Heart right ventricle (tissue), 16 donors: ENCODE measurements at regions of chr12 and their contacts with region 1.

Region 1: GRCh38 chr12:109264095-109264942 is 44.8 kb downstream of the FOXN4 start:
- DNase-seq: peak; percentile 64 to 77
- ATAC-seq: peak; percentile 56 to 86 (median 70)
- H3K4me3 ChIP-seq: no peak overlapping the region
- H3K27ac ChIP-seq: peak overlapping the region in 3 of 10 donors; percentile 36 to 67 (median 44)
- H3K4me1 ChIP-seq: peaks cover 0 to 7% (median 0%) of the 10 kb centered on the region in 9 donors
- H3K27me3 ChIP-seq: no peaks in the 10 kb centered on the region
- CTCF ChIP-seq: peak; percentile 56 to 78 (median 72)

Region 2: GRCh38 chr12:109192358-109192757 is 72.0 kb before region 1 on chr12:
- intact Hi-C with region 1: no loop called
- DNase-seq: no peak
- ATAC-seq: peak in 3 of 8 donors; percentile 15 to 67 (median 34)
- H3K4me3 ChIP-seq: no peak overlapping the region
- H3K27ac ChIP-seq: peak overlapping the region in 2 of 10 donors; percentile 14 to 15
- H3K4me1 ChIP-seq: peaks cover 0 to 20% (median 0%) of the 10 kb centered on the region in 9 donors
- H3K27me3 ChIP-seq: no peaks in the 10 kb centered on the region
- CTCF ChIP-seq: no peak

Region 3: GRCh38 chr12:109385339-109386067 is 121.2 kb after region 1 on chr12:
- intact Hi-C with region 1: loop called in 9 of 10 experiments (anchors 1 to 5 kb)
- DNase-seq: no peak
- ATAC-seq: peak in 7 of 8 donors; percentile 25 to 76 (median 62)
- H3K4me3 ChIP-seq: no peak overlapping the region
- H3K27ac ChIP-seq: no peak overlapping the region
- H3K4me1 ChIP-seq: peaks cover 0 to 6% (median 0%) of the 10 kb centered on the region in 9 donors
- H3K27me3 ChIP-seq: peaks cover 0 to 9% (median 1%) of the 10 kb centered on the region in 7 donors
- CTCF ChIP-seq: peak in 8 of 9 donors; percentile 42 to 72 (median 58)

Region 4: DNA sequence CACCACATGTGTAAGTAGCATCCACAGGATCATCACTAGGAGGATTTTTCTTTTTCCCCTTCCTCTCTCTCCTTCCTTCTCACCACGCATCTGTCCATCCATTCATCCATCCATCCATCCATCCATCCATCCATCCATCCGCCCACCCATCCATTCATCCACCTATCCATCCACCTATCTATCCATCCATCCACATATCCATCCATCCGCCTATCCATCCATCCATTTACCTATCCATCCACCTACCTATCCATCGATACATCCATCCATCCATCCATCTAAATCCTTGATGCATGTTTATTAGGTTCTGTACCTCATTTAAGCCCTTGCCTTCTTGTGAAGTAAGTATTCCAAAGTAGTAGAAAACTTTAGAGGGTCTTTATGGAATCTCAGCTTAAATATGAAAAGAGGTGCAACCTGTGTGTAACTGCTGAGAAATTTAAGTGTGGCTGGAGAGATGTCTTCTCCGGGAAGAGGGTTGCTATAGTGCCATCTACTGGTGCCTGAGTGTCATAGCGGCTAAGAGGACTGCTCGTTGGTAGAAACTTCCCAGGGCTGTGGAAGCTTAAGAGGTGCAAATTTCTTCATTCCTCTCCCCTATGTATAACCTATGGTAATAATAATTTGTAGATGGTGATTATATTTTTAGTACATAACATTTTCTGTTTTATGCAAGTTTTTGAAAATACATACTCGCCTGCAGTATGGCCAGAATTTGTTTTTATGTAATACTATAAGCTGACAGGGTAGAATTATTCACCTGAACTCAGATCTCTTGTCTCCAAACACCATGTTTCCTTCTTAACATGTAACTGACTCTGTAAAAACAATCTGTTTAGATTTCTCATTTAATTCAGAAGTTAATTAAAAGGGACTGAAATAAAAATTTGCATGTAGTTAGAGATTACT is 129.4 kb after region 1 on chr12:
- intact Hi-C with region 1: loop called in 5 of 10 experiments (anchors 2 to 5 kb)
- DNase-seq: peak in 1 of 2 donors; percentile 11
- ATAC-seq: peak in 5 of 8 donors; percentile 28 to 67 (median 61)
- H3K4me3 ChIP-seq: no peak overlapping the region
- H3K27ac ChIP-seq: no peak overlapping the region
- H3K4me1 ChIP-seq: no peaks in the 10 kb centered on the region
- H3K27me3 ChIP-seq: peaks cover 0 to 11% (median 0%) of the 10 kb centered on the region in 7 donors
- CTCF ChIP-seq: peak; percentile 74 to 94 (median 89)

Region 5: DNA sequence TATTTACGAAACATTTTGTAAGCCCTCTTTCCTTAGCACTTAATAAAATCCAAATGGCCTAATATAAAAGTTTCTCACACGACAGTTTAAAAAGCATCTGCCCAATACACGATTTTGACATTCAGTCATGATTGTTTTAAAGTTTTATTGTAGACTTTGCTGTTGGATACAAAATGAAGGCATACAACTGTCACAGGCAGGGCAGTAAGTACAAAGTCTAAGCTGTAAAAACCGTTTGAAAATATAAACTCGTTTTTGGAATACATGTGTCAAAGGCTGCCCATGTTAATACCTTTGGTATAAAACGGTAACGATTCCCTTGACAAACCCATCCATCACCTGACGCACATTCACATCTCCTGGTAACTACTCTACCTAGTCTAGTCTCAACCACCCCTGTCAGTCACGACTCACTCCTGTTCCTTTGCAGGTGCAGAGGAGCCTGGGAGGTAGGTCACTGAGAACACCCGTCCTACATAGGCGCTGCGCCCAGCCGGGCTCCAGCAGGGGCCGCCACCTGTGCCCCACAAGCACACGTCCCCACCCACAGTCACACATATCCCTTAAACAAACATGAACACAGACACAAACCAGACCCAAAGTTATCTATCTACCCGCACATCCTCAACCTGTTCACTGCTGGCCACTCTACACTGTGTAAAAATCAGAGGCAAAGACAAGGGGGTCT is 185.7 kb after region 1 on chr12:
- intact Hi-C with region 1: no loop called
- DNase-seq: no peak
- ATAC-seq: no peak
- H3K4me3 ChIP-seq: no peak overlapping the region
- H3K27ac ChIP-seq: no peak overlapping the region
- H3K4me1 ChIP-seq: peaks cover 0 to 20% (median 10%) of the 10 kb centered on the region in 9 donors
- H3K27me3 ChIP-seq: no peaks in the 10 kb centered on the region
- CTCF ChIP-seq: no peak